ENCODE measurements at regions of chr1 and their contacts with region 1.

Region 1: GRCh38 chr1:211944733-211945500 is 90.4 kb downstream of the INTS7 start:
- DNase-seq: peak in 2 of 3 donors; percentile 37 to 55
- ATAC-seq: peak; percentile 80 to 91
- H3K4me3 ChIP-seq: no peak overlapping the region
- H3K27ac ChIP-seq: no peak overlapping the region
- H3K4me1 ChIP-seq: no peaks in the 10 kb centered on the region
- H3K27me3 ChIP-seq: no peaks in the 10 kb centered on the region

Region 2: GRCh38 chr1:211680752-211681327 is 264.1 kb before region 1 on chr1:
- intact Hi-C with region 1: loop called in 1 of 4 experiments (anchors 10 kb)
- DNase-seq: peak; percentile 63 to 86 (median 82)
- ATAC-seq: peak; percentile 89 to 90
- H3K4me3 ChIP-seq: no peak overlapping the region
- H3K27ac ChIP-seq: no peak overlapping the region
- H3K4me1 ChIP-seq: no peaks in the 10 kb centered on the region
- H3K27me3 ChIP-seq: no peaks in the 10 kb centered on the region

Region 3: DNA sequence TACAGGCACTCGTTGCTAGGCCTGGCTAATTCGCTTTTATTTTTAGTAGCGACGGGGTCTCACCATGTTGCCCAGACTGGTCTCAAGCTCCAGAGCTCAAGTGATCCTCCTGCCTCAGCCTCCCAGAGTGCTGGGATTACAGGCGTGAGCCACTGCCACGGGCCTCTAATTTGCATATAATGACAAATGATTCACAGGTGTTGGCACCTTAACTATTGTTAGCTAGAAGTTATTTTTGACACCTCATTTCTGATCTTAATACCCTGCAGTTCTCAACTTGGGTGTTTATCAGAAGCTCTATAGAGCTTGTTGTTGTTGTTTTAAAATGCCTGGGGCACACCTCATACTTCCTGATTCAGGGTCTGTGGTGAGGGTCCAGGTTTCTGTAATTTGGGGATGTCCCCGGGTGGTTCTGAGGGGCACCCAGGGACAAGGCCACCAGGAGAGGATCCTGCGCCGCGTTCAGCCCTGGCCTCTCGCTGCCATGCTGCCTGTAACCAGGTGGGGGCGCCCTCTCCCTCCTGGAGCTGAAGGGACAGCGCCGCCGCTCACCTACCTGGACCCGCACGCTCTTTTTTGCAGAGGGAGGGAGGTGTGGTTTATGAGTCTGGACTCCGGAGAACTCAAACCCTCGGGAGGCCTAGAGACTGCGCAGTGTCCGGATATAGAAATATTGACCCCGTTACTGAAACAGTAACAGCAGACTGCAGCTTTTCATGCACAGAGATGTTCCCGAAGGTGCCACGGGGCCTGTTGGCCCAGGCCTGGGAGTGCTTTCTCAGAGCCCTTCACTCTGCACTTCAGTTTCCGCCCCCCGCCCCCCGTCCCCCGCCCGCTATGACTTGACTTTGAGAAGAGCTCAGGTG is 246.5 kb before region 1 on chr1:
- intact Hi-C with region 1: loop called in 1 of 4 experiments (anchors 10 kb)
- DNase-seq: peak; percentile 64 to 90 (median 89)
- ATAC-seq: peak; percentile 82 to 86
- H3K4me3 ChIP-seq: no peak overlapping the region
- H3K27ac ChIP-seq: no peak overlapping the region
- H3K4me1 ChIP-seq: peaks cover 2% of the 10 kb centered on the region
- H3K27me3 ChIP-seq: no peaks in the 10 kb centered on the region

Region 4: GRCh38 chr1:211908453-211908852 is 36.5 kb before region 1 on chr1:
- intact Hi-C with region 1: no loop called
- DNase-seq: no peak
- ATAC-seq: no peak
- H3K4me3 ChIP-seq: no peak overlapping the region
- H3K27ac ChIP-seq: no peak overlapping the region
- H3K4me1 ChIP-seq: no peaks in the 10 kb centered on the region
- H3K27me3 ChIP-seq: no peaks in the 10 kb centered on the region

Measured in right cardiac atrium (tissue), 5 donors.